PC-9 (cell line): ENCODE measurements at regions of chr18 and their contacts with region 1.

Region 1: DNA sequence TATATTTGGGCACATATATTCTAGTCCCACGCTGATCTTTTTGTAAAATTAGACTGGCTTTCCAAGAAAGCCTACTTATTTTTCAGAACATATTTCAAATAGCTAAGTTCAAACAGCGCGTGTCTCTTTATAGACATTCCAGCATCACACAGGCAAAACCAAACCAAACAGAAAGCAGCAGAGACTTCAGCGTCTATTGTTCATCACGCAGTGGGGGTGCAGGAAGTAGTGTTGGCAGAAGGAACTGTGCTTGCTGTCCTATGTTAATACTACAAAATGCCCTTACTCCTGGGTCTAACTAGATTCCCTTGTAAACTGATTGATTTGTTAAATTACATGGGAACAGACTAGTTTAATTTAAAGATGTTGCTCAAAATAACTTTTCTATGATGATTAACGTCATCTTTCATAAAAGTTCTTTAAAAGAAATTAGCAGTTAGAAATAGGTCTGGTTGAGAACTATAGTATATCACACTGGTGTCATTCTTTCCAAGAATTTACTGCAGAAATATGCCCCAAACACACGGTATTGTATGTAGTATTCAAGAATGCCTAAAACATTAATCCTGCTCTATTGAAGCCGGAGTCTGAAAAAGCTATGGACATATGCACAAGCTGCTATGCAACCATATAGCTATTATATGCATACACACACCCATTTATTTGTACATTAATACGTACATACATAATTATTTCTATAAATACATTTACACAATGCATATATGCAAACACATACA is 436.3 kb downstream of the CBLN2 start:
- DNase-seq: no peak
- H3K4me3 ChIP-seq: no peak overlapping the region
- H3K27ac ChIP-seq: no peak overlapping the region
- H3K4me1 ChIP-seq: no peaks in the 10 kb centered on the region
- H3K27me3 ChIP-seq: no peaks in the 10 kb centered on the region
- CTCF ChIP-seq: no peak

Region 2: DNA sequence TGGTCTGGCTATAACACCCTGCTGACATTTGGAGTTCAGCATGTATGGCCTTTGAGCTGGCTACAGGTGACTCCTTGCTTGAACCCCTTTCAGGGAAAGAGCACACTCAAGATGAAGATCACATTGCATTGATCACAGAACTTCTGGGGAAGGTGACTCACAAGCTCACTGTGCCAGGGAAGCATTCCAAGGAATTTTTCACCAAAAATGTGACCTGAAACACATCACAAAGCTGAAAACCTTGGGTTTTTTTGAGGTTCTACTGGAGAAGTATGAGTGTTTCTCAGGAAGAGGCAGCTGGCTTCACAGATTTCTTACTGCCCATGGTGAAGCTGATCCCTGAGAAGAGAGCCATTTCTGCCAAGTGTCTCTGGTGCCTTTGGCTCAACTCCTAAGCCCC is 442.7 kb before region 1 on chr18:
- CTCF ChIA-PET with region 1: no interaction called
- POLR2A ChIA-PET with region 1: no interaction called
- intact Hi-C with region 1: no loop called
- DNase-seq: no peak
- H3K4me3 ChIP-seq: no peak overlapping the region
- H3K27ac ChIP-seq: no peak overlapping the region
- H3K4me1 ChIP-seq: no peaks in the 10 kb centered on the region
- H3K27me3 ChIP-seq: no peaks in the 10 kb centered on the region
- CTCF ChIP-seq: no peak

Region 3: DNA sequence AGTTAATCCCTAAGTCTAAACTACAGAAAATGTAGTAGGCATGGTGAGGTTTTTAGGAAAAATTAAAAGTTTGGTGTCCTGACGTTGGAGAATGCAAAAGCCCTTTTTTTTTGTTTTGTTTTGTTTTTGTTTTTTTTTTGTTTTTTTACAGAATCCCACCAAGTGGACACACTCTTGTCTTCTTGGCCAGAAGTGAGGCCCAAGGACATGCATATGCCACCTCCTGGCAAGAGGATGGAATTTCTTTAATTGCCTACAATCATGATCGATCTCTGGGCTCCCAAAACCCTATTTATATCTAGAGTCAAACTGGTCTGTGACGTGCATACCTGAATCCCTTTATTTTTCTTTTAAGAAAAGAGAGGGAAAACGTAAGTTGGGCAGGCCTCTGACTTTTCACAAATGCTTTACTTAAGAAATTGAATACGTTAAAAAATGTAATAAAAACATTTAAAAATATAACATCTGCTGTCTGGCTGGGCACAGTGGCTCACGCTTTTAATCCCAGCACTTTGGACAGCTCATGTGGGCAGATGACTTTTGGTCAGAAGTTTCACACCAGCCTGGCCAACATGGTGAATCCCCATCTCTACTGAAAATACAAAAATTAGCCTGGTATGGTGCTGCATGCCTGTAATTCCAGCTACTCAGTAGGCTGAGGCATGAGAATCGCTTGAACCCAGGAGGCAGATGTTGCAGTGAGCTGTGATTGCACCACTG is 66.3 kb before region 1 on chr18:
- CTCF ChIA-PET with region 1: no interaction called
- POLR2A ChIA-PET with region 1: no interaction called
- intact Hi-C with region 1: no loop called
- DNase-seq: no peak
- H3K4me3 ChIP-seq: no peak overlapping the region
- H3K27ac ChIP-seq: no peak overlapping the region
- H3K4me1 ChIP-seq: no peaks in the 10 kb centered on the region
- H3K27me3 ChIP-seq: no peaks in the 10 kb centered on the region
- CTCF ChIP-seq: 0 out of 2 replicates have a peak, but pooled peaks have one; percentile 23

Region 4: DNA sequence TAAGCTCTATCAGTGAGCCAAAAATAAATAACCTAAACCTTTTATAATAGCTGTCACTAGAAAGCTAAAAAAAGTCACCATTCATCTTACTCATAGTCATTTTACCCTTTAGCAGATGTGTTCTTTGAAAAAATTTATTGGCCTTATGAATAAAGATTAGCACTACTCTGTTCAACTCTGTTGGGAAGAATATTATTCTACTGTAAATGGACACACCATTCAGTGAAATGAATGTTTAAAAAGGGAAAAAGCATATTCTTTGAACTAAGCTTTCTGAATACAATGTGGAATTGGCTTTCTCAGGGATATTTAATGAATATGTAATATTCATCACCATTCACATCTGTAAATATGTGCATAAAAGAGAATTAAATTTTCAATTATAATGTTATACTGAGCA is 14.3 kb after region 1 on chr18:
- CTCF ChIA-PET with region 1: no interaction called
- POLR2A ChIA-PET with region 1: interaction called, 11 read pairs
- intact Hi-C with region 1: no loop called
- DNase-seq: no peak
- H3K4me3 ChIP-seq: no peak overlapping the region
- H3K27ac ChIP-seq: no peak overlapping the region
- H3K4me1 ChIP-seq: no peaks in the 10 kb centered on the region
- H3K27me3 ChIP-seq: no peaks in the 10 kb centered on the region
- CTCF ChIP-seq: no peak

Region 5: GRCh38 chr18:72555101-72555500 is 447.3 kb after region 1 on chr18:
- CTCF ChIA-PET with region 1: no interaction called
- POLR2A ChIA-PET with region 1: no interaction called
- intact Hi-C with region 1: no loop called
- DNase-seq: no peak
- H3K4me3 ChIP-seq: no peak overlapping the region
- H3K27ac ChIP-seq: no peak overlapping the region
- H3K4me1 ChIP-seq: no peaks in the 10 kb centered on the region
- H3K27me3 ChIP-seq: no peaks in the 10 kb centered on the region; the same call in 1 of the 2 replicates
- CTCF ChIP-seq: no peak